ENCODE measurements at regions of chr15 and their contacts with region 1.

Region 1: DNA sequence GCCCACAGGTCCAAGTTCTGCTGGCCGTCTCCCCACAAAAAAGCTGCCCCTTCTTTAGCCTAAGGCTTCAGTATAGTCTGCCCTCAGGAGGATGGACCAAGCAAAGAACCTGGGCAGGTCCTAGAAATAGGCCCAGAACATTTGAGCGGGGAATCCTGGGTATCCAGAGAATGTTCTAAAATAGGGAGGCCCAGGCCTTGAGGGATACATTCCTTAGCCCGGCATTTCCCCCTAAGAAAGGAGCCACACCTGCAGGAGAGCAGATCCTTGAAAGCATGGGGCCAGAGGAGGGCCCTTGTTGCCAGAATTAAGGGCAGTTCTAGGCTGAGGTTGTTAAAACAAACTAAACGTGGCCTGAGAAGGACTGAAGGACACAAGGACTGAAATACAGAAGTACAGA is 20.6 kb upstream of the MEX3B start:
- DNase-seq: no peak
- ATAC-seq: no peak
- H3K4me3 ChIP-seq: no peak overlapping the region
- H3K27ac ChIP-seq: no peak overlapping the region
- H3K4me1 ChIP-seq: no peaks in the 10 kb centered on the region
- H3K27me3 ChIP-seq: peaks cover 0 to 25% (median 11%) of the 10 kb centered on the region in 3 donors
- CTCF ChIP-seq: no peak
- POLR2A ChIP-seq: no peak

Region 2: DNA sequence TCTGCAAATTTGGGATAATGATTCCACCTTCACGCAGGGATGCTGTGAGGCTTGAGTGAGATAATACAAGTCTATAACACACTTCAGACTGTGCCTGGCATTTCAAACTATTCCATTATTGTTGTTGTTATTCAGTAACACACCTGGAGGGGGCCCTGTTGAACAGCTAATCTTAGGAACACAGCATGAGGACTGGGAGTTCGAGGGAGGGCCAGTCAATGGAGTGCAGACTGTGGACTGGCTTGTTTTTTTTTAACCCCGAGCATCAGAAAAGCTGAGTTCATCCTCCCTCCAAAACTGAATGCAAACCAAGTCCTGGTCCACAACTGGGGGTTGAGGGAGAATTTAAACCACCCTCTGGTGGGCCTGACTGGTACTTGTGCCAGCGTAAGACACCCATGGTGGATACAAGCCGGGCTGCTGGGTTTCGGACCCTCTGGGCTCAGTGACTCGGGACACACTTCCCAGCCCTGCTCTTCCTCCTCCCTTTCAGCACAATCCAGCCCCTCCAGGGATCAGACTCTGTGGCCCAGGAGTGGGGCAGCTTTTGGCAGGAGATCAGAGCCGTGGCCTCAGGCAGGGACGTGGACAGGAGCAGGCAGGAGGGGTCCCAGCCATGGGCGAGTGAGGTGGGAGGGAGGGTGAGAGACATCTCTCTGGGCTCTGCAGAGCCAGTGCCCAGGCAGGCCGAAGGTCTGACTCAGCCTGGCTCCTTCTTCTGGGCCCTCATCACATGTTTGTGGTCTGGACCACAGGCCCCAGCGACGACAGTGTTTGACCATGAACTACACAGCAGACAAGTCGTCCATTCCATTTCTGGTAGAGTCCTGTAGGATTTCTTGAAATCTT is 15.7 kb after region 1 on chr15:
- in situ Hi-C with region 1: no loop called
- intact Hi-C with region 1: loop called (anchors 1 kb)
- DNase-seq: no peak
- ATAC-seq: no peak
- H3K4me3 ChIP-seq: no peak overlapping the region
- H3K27ac ChIP-seq: no peak overlapping the region
- H3K4me1 ChIP-seq: no peaks in the 10 kb centered on the region
- H3K27me3 ChIP-seq: no peaks in the 10 kb centered on the region
- CTCF ChIP-seq: no peak
- POLR2A ChIP-seq: no peak